CD8-positive, alpha-beta T cell (primary cell): ENCODE measurements at regions of chr18 and their contacts with region 1.

Region 1: GRCh38 chr18:33483908-33484307 is 43.4 kb upstream of the CCDC178 start:
- DNase-seq: no peak
- ATAC-seq: no peak
- H3K4me3 ChIP-seq: no peak overlapping the region
- H3K4me3 Mint-ChIP-seq: no peak overlapping the region
- H3K27ac ChIP-seq: no peak overlapping the region
- H3K27ac Mint-ChIP-seq: no peak overlapping the region
- H3K4me1 ChIP-seq: no peaks in the 10 kb centered on the region
- H3K4me1 Mint-ChIP-seq: no peaks in the 10 kb centered on the region
- H3K27me3 ChIP-seq: no peaks in the 10 kb centered on the region
- H3K27me3 Mint-ChIP-seq: no peaks in the 10 kb centered on the region
- CTCF ChIP-seq: no peak

Region 2: DNA sequence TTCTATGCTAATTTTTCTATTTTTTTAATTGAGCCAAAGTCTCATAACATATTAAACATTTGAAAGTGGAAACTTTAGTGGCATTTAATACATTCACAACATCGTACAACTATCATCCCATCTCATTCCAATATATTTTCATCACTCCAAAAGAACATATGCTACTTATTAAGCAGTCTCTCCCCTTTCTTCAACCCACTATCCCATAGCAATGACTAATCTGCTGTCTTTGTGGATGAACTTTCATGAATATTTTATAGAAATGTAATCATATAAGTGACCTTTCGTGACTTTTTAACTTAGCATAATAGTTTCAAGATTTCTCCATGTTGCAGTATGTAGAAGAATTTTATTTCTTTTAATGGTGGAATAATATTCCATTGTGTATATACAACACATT is 133.7 kb before region 1 on chr18:
- CTCF ChIA-PET with region 1: no interaction called
- POLR2A ChIA-PET with region 1: no interaction called
- intact Hi-C with region 1: no loop called
- DNase-seq: no peak
- ATAC-seq: no peak
- H3K4me3 ChIP-seq: no peak overlapping the region
- H3K4me3 Mint-ChIP-seq: no peak overlapping the region
- H3K27ac ChIP-seq: no peak overlapping the region
- H3K27ac Mint-ChIP-seq: no peak overlapping the region
- H3K4me1 ChIP-seq: no peaks in the 10 kb centered on the region
- H3K4me1 Mint-ChIP-seq: no peaks in the 10 kb centered on the region
- H3K27me3 ChIP-seq: no peaks in the 10 kb centered on the region
- H3K27me3 Mint-ChIP-seq: no peaks in the 10 kb centered on the region
- CTCF ChIP-seq: no peak

Region 3: DNA sequence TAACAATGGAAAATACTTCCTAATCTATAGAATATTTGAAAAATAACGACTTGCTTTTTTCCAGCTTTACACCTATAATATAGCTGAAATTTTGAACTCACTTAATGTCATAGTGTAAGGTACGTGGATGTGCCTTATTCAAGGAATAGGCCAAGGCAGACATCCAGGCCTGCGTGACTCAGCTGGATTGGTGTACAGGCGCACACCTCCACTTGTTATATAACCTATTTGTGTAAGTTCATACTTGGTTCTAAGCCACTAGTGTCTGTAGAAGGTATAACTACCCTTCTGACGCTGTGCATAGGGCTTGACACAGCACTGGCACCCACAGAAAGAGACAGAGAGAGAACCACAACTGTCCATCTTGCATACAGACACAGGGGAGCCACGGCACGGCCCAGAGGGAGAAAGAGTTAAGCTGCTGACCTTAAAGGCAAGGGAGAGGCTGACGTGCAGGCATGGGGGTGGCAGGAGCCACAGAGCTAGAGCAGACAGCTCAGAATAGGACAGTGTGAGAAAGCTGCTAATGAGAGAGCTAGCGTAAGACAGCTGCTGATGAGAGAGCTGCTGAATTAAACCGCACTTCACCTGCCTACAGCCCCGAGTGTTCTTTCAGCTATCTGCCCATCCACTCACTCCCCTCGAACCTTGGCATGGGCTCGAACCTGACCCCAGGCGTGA is 59.5 kb before region 1 on chr18:
- CTCF ChIA-PET with region 1: no interaction called
- POLR2A ChIA-PET with region 1: no interaction called
- intact Hi-C with region 1: loop called in 1 of 2 experiments (anchors 10 kb)
- DNase-seq: no peak
- ATAC-seq: no peak
- H3K4me3 ChIP-seq: no peak overlapping the region
- H3K4me3 Mint-ChIP-seq: no peak overlapping the region
- H3K27ac ChIP-seq: no peak overlapping the region
- H3K27ac Mint-ChIP-seq: no peak overlapping the region
- H3K4me1 ChIP-seq: no peaks in the 10 kb centered on the region
- H3K4me1 Mint-ChIP-seq: no peaks in the 10 kb centered on the region
- H3K27me3 ChIP-seq: no peaks in the 10 kb centered on the region
- H3K27me3 Mint-ChIP-seq: no peaks in the 10 kb centered on the region
- CTCF ChIP-seq: no peak

Region 4: GRCh38 chr18:33541316-33541715 is 57.4 kb after region 1 on chr18:
- CTCF ChIA-PET with region 1: no interaction called
- POLR2A ChIA-PET with region 1: no interaction called
- intact Hi-C with region 1: no loop called
- DNase-seq: no peak
- ATAC-seq: no peak
- H3K4me3 ChIP-seq: no peak overlapping the region
- H3K4me3 Mint-ChIP-seq: no peak overlapping the region
- H3K27ac ChIP-seq: no peak overlapping the region
- H3K27ac Mint-ChIP-seq: no peak overlapping the region
- H3K4me1 ChIP-seq: no peaks in the 10 kb centered on the region
- H3K4me1 Mint-ChIP-seq: no peaks in the 10 kb centered on the region
- H3K27me3 ChIP-seq: no peaks in the 10 kb centered on the region
- H3K27me3 Mint-ChIP-seq: no peaks in the 10 kb centered on the region
- CTCF ChIP-seq: no peak